B cell (primary cell): ENCODE measurements at regions of chr16 and their contacts with region 1.

Region 1: DNA sequence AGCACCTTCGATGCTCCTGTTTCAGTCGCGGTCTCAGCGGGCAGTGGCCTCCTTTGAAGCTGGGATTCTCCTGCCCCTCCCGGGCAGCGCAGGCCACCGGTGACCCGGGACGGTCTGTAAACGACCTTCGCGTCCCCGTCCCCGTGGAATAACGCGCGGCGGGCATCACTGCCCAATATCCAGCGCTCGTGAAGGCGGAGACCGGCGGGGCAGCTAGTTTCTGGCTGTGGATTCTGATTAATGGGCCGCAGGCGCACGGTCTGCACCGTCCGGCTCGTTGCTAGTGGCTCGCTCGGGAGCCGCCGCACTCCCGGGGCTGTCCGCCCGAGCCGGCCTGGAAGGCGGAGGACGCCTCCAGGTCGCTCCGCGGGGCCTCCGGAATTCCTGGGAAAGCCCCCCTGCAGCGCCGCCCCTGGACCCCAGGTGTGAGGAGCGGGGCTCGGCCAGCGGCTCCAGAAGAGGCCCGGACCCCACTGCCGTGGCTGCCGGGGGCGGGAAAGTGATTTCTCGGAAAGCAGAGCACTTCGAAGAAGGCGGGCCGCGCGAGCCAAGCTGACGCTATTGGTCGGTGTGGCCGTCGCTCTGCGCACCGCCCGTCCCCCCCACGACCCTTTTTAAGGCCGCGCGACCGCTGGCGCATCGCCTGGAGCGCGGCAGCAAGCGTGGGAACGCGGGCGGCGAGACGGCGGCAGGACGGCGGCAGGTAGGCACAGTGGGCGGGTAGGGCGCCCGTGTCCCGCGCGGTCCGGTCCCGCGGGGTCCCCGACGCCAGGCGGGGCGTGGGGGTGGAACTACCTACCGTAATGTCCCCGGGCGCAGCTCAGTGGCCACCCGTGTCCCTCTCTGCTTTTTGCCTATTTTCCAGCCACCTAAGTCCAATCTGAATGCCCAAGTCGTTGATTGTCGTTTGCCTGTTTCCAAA is at the start of gene IRF8:
- DNase-seq: peak; percentile 94
- ATAC-seq: peak; percentile 65
- H3K4me3 ChIP-seq: peak within 1 kb of the TSS; percentile 77 to 99 (median 88)
- H3K4me3 Mint-ChIP-seq: peak within 1 kb of the TSS; percentile 92
- H3K27ac ChIP-seq: peak within 1 kb of the TSS; percentile 93 to 97
- H3K27ac Mint-ChIP-seq: peak within 1 kb of the TSS; percentile 98
- H3K4me1 ChIP-seq: peaks cover 41 to 52% of the 10 kb centered on the region in 2 donors
- H3K4me1 Mint-ChIP-seq: peaks cover 63% of the 10 kb centered on the region
- H3K27me3 ChIP-seq: no peaks in the 10 kb centered on the region
- H3K27me3 Mint-ChIP-seq: no peaks in the 10 kb centered on the region
- CTCF ChIP-seq: no peak
- total RNA-seq, gene IRF8: 332 and 337 TPM in 2 replicates

Region 2: GRCh38 chr16:85717393-85718121 is 181.2 kb before region 1 on chr16:
- CTCF ChIA-PET with region 1: no interaction called
- POLR2A ChIA-PET with region 1: no interaction called
- intact Hi-C with region 1: no loop called
- DNase-seq: peak; percentile 77
- ATAC-seq: peak; percentile 28
- H3K4me3 ChIP-seq: no peak overlapping the region
- H3K4me3 Mint-ChIP-seq: no peak overlapping the region
- H3K27ac ChIP-seq: no peak overlapping the region
- H3K27ac Mint-ChIP-seq: peak overlapping the region; percentile 26
- H3K4me1 ChIP-seq: peaks cover 7 to 34% of the 10 kb centered on the region in 2 donors
- H3K4me1 Mint-ChIP-seq: peaks cover 27% of the 10 kb centered on the region
- H3K27me3 ChIP-seq: no peaks in the 10 kb centered on the region
- H3K27me3 Mint-ChIP-seq: no peaks in the 10 kb centered on the region
- CTCF ChIP-seq: peak; percentile 80

Region 3: DNA sequence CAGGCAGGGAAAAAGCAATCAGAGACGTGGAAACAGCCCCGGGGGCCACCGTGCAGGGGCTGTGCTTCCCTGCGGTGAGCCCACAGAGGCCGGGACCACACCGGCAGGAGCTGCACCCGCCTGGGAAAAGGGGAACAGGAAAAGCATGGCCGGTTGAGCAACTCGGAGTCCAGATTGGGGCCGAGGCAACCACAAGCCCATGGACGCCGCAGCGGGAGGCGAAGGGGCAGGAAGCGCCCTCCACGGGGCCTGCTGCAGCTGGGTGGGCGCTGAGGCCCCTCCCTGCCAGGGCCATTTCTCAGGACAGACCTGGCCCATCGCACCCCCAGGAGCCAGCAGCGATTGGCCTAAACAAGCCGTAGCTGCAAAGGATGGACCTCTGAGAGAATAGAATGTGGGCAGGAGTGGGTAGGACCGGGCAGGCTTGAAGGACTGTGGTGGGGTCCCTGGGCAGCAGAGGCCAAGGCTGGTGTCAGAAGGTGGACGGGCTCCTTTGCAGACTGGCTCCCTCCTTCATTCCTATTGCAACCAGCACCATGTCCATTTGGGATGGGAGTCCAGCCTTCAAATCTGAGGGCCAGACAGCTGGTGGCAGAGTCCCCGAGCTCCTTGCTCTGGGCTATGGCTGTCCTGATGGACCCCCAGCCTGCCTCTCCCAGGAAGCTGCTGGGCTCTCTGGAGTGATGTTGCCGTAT is 68.9 kb before region 1 on chr16:
- CTCF ChIA-PET with region 1: interaction called, 364 read pairs
- POLR2A ChIA-PET with region 1: interaction called, 13 read pairs
- intact Hi-C with region 1: loop called (anchors 1 kb)
- DNase-seq: peak; percentile 42
- ATAC-seq: no peak
- H3K4me3 ChIP-seq: peak overlapping the region in 4 of 5 experiments; percentile 11 to 28 (median 16)
- H3K4me3 Mint-ChIP-seq: peak overlapping the region; percentile 70
- H3K27ac ChIP-seq: peak overlapping the region; percentile 55 to 58
- H3K27ac Mint-ChIP-seq: peak overlapping the region; percentile 84
- H3K4me1 ChIP-seq: peaks cover 50 to 51% of the 10 kb centered on the region in 2 donors
- H3K4me1 Mint-ChIP-seq: peaks cover 64% of the 10 kb centered on the region
- H3K27me3 ChIP-seq: peaks cover 0 to 6% (median 0%) of the 10 kb centered on the region in 4 experiments
- H3K27me3 Mint-ChIP-seq: no peaks in the 10 kb centered on the region
- CTCF ChIP-seq: no peak

Region 4: GRCh38 chr16:85888405-85889331 is 10.1 kb before region 1 on chr16:
- CTCF ChIA-PET with region 1: interaction called, 3 read pairs
- POLR2A ChIA-PET with region 1: interaction called, 3 read pairs
- intact Hi-C with region 1: loop called (anchors 1 kb)
- DNase-seq: peak; percentile 83
- ATAC-seq: peak; percentile 82
- H3K4me3 ChIP-seq: peak overlapping the region in 2 of 5 experiments; percentile 13 to 16
- H3K4me3 Mint-ChIP-seq: peak overlapping the region; percentile 39
- H3K27ac ChIP-seq: peak overlapping the region; percentile 64 to 65
- H3K27ac Mint-ChIP-seq: peak overlapping the region; percentile 82
- H3K4me1 ChIP-seq: peaks cover 20 to 23% of the 10 kb centered on the region in 2 donors
- H3K4me1 Mint-ChIP-seq: peaks cover 46% of the 10 kb centered on the region
- H3K27me3 ChIP-seq: no peaks in the 10 kb centered on the region
- H3K27me3 Mint-ChIP-seq: no peaks in the 10 kb centered on the region
- CTCF ChIP-seq: no peak

Region 5: GRCh38 chr16:85935974-85936760 is 37.4 kb after region 1 on chr16:
- CTCF ChIA-PET with region 1: interaction called, 7 read pairs
- POLR2A ChIA-PET with region 1: interaction called, 8 read pairs
- intact Hi-C with region 1: loop called (anchors 1 kb)
- DNase-seq: peak; percentile 92
- ATAC-seq: peak; percentile 80
- H3K4me3 ChIP-seq: peak overlapping the region in 4 of 5 experiments; percentile 47 to 63 (median 55)
- H3K4me3 Mint-ChIP-seq: peak overlapping the region; percentile 81
- H3K27ac ChIP-seq: peak overlapping the region; percentile 96 to 98
- H3K27ac Mint-ChIP-seq: peak overlapping the region; percentile 94
- H3K4me1 ChIP-seq: peaks cover 76 to 85% of the 10 kb centered on the region in 2 donors
- H3K4me1 Mint-ChIP-seq: peaks cover 84% of the 10 kb centered on the region
- H3K27me3 ChIP-seq: no peaks in the 10 kb centered on the region
- H3K27me3 Mint-ChIP-seq: no peaks in the 10 kb centered on the region
- CTCF ChIP-seq: no peak

Region 6: DNA sequence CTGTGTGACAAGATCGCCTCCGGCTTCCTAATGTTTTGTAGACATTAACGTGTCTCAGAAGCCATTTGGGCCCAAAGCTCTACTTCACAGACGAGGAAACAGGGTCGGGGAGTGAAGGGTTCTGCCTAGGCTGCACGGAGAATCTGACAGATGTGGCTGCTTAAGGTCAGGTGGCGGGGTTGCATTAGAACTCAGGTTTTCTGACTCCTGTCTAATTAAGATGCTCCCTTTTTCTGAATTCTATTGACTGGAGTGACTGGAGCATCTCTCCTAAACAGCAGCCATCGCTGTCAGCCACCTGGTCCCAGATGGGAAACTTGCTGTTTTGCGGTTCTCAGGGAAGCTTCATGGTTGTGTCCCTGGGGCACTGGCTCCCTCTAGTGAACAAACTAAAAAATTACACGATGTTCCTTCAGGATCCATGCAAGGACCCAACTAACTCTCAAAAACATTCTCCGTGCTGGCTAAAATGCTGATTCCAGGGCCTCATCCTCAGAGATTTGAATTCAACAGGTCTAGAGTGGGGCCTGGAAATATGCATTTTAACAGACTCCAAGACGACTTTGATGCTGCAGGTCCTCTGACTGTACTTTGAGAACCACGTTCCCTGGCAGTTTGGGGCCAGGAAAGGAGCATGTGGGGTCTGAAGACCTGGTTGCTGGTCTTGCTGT is 117.6 kb after region 1 on chr16:
- CTCF ChIA-PET with region 1: interaction called, 46 read pairs
- POLR2A ChIA-PET with region 1: interaction called, 4 read pairs
- intact Hi-C with region 1: loop called (anchors 2 kb)
- DNase-seq: peak; percentile 83
- ATAC-seq: peak; percentile 61
- H3K4me3 ChIP-seq: no peak overlapping the region
- H3K4me3 Mint-ChIP-seq: no peak overlapping the region
- H3K27ac ChIP-seq: no peak overlapping the region
- H3K27ac Mint-ChIP-seq: peak overlapping the region; percentile 43
- H3K4me1 ChIP-seq: peaks cover 32 to 40% of the 10 kb centered on the region in 2 donors
- H3K4me1 Mint-ChIP-seq: peaks cover 35% of the 10 kb centered on the region
- H3K27me3 ChIP-seq: peaks cover 0 to 28% (median 5%) of the 10 kb centered on the region in 4 experiments
- H3K27me3 Mint-ChIP-seq: peaks cover 8% of the 10 kb centered on the region
- CTCF ChIP-seq: peak; percentile 87